GM18951 (cell line): ENCODE measurements at regions of chr9 and their contacts with region 1.

Region 1: DNA sequence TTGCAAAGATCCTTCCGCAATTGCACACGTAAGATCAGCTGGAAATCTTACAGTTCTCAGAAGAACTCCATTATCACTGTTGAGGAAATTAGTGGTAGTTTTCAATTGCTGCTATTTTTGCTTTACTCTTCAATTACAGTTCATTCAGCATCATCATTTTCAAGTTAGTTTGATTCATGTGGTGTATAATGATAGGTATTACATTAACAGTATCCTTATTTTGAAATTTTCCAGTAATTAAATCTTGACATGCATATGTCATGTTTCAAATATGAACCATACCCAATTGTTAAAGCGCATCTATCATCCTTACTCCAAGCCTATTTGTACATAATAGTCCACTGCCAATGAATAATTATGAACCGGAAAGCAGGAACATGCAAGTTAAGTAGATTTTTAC is 60.3 kb downstream of the NR6A1 start:
- POLR2A ChIP-seq: no peak

Region 2: GRCh38 chr9:124617471-124618141 is 93.2 kb before region 1 on chr9:
- in situ Hi-C with region 1: loop called (anchors 5 kb)
- POLR2A ChIP-seq: no peak

Region 3: GRCh38 chr9:125343518-125344275 is 632.9 kb after region 1 on chr9:
- in situ Hi-C with region 1: no loop called
- POLR2A ChIP-seq: no peak